SK-N-SH (cell line): ENCODE measurements at regions of chr10 and their contacts with region 1.

Region 1: DNA sequence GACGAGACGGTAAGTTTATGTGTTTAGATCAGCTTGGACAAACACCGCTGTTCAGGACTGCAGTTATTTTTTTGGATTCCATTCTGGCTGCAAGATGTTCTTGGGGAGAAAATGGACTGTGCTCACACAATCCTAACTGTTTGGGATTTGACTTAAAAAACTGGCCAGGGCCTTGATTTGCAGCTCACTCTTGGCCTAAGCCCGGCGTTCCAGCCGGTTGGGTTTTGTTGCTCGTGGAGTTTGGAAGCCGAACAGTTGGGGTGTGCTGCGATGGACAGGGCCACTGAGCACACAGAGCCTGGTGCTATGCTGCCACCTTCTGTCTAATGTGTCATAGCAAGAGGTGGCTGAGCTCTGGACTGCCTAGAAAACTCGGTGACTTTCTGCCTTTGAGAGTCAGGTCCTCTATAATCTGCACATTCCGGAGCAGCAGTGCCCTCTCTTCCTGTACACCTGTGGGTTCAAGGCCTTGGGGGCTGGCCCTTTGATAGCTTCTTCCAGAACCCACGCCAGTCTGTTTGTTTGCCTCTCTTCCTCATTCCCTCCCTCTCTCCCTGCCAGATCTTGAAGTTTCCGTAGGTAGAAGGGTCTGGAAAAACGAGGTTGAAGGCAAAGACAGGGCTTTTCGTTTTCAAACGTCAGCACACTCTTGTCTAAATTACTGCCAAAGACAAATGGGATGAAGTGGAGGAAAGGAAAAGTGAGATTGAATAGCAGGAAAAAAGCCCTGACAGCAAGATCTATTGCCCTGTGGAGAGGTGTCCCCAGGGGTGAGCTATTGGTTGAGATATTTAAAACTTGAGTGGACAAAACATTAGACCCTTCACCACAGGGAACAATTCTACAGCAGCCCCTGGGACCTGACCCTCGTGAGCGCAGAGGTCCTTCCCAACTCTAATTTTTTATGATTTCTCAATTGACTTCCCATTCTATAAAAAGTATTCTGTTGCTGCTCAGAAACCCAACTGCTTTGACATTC is 167.5 kb upstream of the HABP2 start:
- DNase-seq: peak; percentile 74
- H3K4me3 ChIP-seq: peak overlapping the region in 1 of 2 experiments; percentile 20; a peak in 1 of 4 replicates
- H3K27ac ChIP-seq: no peak overlapping the region
- H3K4me1 ChIP-seq: peaks cover 0 to 7% of the 10 kb centered on the region in 2 experiments
- H3K27me3 ChIP-seq: no peaks in the 10 kb centered on the region
- CTCF ChIP-seq: peak; percentile 87
- EP300 ChIP-seq: no peak
- RAD21 ChIP-seq: peak; percentile 99

Region 2: GRCh38 chr10:112471878-112472487 is 913.3 kb before region 1 on chr10:
- CTCF ChIA-PET with region 1: interaction called, 45 read pairs
- POLR2A ChIA-PET with region 1: no interaction called
- DNase-seq: peak; percentile 48
- H3K4me3 ChIP-seq: no peak overlapping the region
- H3K27ac ChIP-seq: no peak overlapping the region
- H3K4me1 ChIP-seq: peaks cover 2 to 6% of the 10 kb centered on the region in 2 experiments; a peak in 3 of 4 replicates
- H3K27me3 ChIP-seq: no peaks in the 10 kb centered on the region
- CTCF ChIP-seq: peak; percentile 82
- EP300 ChIP-seq: no peak
- RAD21 ChIP-seq: peak; percentile 78

Region 3: DNA sequence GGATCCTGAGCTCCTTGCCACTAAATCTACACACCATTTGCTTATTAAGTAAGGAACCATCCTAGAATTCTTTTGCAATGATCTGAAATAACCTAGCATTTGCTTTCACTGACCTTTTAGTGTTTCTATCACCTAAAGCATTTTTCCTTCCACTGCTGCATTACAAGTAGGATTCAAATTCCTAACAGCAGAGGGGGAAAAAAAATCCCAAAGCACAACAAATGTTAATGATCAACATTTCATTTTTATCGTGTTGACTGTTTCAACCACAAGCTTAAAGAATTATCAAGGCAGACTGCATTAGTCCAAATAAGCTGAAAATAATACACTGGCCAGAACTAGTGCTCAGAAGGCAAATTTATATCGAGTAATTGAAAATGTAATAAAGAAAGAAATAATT is 609.9 kb before region 1 on chr10:
- CTCF ChIA-PET with region 1: interaction called, 11 read pairs
- POLR2A ChIA-PET with region 1: no interaction called
- DNase-seq: no peak
- H3K4me3 ChIP-seq: no peak overlapping the region
- H3K27ac ChIP-seq: peak overlapping the region in 1 of 2 experiments; percentile 86; a peak in 2 of 4 replicates
- H3K4me1 ChIP-seq: peaks cover 4 to 23% of the 10 kb centered on the region in 2 experiments; a peak in 3 of 4 replicates
- H3K27me3 ChIP-seq: no peaks in the 10 kb centered on the region
- CTCF ChIP-seq: peak; percentile 40
- EP300 ChIP-seq: no peak
- RAD21 ChIP-seq: no peak

Region 4: GRCh38 chr10:113216102-113216501 is 169.2 kb before region 1 on chr10:
- CTCF ChIA-PET with region 1: interaction called, 15 read pairs
- POLR2A ChIA-PET with region 1: no interaction called
- DNase-seq: no peak
- H3K4me3 ChIP-seq: no peak overlapping the region
- H3K27ac ChIP-seq: no peak overlapping the region
- H3K4me1 ChIP-seq: peaks cover 0 to under 1% of the 10 kb centered on the region in 2 experiments; a peak in 1 of 4 replicates
- H3K27me3 ChIP-seq: no peaks in the 10 kb centered on the region
- CTCF ChIP-seq: peak; percentile 18
- EP300 ChIP-seq: no peak
- RAD21 ChIP-seq: peak; percentile 42

Region 5: DNA sequence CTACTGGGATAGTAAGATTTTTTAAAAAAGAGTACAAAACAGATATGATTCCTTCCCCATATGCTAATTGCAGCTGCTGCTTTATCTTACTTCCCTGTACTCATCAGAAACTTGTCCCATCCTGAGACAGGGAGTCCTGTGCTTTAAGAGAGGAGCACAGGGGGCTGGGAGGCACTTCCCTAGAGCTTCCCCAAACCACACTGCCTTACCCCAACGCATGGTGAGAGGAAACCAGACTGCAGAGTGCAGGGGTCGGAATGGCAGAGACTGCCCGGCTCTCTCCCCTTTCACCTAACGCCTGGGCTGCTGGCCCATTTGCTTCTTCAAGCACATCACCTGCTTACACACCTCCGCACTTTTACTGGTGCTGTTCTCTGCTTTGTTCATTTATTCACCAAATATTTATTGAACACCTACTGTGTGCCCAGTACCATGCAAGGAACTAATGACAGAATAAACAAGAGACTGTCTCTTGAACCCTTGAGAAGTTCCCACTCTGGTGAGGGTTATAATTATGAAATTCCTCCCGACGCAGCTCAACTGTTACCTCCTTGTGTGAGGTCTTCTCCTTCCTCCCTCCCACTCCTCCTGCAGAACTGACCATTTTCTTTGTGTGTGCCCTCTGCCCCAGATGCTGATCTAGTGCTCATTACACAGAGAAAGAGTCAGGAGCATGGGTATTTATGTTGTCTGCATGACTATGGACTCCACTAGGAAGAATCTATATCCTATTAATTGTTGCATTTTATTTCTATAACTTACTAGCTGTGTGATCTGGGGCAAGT is 145.6 kb before region 1 on chr10:
- CTCF ChIA-PET with region 1: no interaction called
- POLR2A ChIA-PET with region 1: no interaction called
- DNase-seq: no peak
- H3K4me3 ChIP-seq: no peak overlapping the region
- H3K27ac ChIP-seq: no peak overlapping the region
- H3K4me1 ChIP-seq: peaks cover 0 to under 1% of the 10 kb centered on the region in 2 experiments; a peak in 1 of 4 replicates
- H3K27me3 ChIP-seq: no peaks in the 10 kb centered on the region; the same call in 1 of the 2 replicates
- CTCF ChIP-seq: no peak
- EP300 ChIP-seq: no peak
- RAD21 ChIP-seq: no peak

Region 6: DNA sequence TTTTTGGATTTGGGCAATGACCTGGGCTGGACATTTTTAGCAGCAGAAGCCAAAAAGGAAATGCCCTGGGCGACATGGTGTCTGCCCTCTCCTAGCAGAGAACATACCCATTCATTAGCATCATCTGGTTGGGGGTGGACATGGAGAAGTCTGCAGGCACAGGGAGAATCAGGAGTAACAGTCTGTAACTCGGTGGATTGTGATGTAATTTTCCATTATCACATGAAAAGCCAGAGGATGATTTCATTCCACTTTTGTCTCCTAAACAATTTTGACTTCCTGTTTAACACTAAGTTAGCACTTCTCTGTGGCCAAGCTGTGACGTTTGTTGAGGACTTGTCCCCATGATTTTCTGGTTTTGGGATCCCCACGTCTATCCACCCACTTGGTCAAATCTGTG is 13.8 kb after region 1 on chr10:
- CTCF ChIA-PET with region 1: interaction called, 12 read pairs
- POLR2A ChIA-PET with region 1: no interaction called
- DNase-seq: no peak
- H3K4me3 ChIP-seq: no peak overlapping the region
- H3K27ac ChIP-seq: no peak overlapping the region
- H3K4me1 ChIP-seq: no peaks in the 10 kb centered on the region; a peak in 1 of 4 replicates
- H3K27me3 ChIP-seq: no peaks in the 10 kb centered on the region; the same call in 1 of the 2 replicates
- CTCF ChIP-seq: no peak
- EP300 ChIP-seq: no peak
- RAD21 ChIP-seq: no peak

Region 7: DNA sequence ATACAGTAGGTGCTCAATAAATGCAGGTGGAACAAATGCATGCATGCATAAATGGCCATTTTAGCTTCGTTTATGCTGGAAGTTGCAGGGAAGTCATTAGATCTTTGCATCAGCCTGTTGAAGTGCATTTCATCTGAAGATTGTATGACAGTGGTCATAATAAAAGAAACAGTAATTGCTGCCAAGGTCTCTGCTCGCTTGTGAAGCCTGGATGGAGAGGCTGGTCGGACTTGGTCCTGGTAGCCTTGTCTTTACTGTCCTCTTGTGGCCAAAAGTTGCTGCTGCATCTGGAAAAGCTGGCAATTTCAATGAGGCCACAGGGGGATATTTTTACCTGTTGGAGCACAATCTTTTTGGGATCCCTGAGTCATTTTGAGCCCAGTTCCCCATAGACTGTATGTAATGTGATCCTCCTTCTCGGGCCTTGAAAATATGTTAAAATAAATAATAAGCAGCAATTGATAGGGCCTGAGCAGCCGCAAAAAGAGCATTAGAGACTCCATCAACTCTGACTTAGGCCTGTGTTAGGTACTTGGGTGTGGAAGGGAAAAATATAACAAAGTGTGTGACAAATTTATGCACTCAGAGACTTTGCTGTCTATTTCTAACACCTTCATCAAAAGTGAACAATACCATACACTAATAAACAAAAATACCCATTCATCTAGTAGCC is 135.9 kb after region 1 on chr10:
- CTCF ChIA-PET with region 1: interaction called, 20 read pairs
- POLR2A ChIA-PET with region 1: no interaction called
- DNase-seq: peak; percentile 76
- H3K4me3 ChIP-seq: no peak overlapping the region; a peak in 1 of 4 replicates
- H3K27ac ChIP-seq: no peak overlapping the region
- H3K4me1 ChIP-seq: peaks cover 3 to 9% of the 10 kb centered on the region in 2 experiments; a peak in 2 of 4 replicates
- H3K27me3 ChIP-seq: no peaks in the 10 kb centered on the region
- CTCF ChIP-seq: peak; percentile 99
- EP300 ChIP-seq: no peak
- RAD21 ChIP-seq: peak; percentile 96